ENCODE measurements at regions of chr11 and their contacts with region 1.

Region 1: GRCh38 chr11:34126959-34127848 is 21.8 kb downstream of the NAT10 start:
- DNase-seq: no peak
- ATAC-seq: no peak
- H3K4me3 ChIP-seq: no peak overlapping the region
- H3K27ac ChIP-seq: no peak overlapping the region
- H3K4me1 ChIP-seq: no peaks in the 10 kb centered on the region
- H3K27me3 ChIP-seq: no peaks in the 10 kb centered on the region
- CTCF ChIP-seq: no peak
- EP300 ChIP-seq: no peak
- POLR2A ChIP-seq: no peak
- RAD21 ChIP-seq: no peak

Region 2: DNA sequence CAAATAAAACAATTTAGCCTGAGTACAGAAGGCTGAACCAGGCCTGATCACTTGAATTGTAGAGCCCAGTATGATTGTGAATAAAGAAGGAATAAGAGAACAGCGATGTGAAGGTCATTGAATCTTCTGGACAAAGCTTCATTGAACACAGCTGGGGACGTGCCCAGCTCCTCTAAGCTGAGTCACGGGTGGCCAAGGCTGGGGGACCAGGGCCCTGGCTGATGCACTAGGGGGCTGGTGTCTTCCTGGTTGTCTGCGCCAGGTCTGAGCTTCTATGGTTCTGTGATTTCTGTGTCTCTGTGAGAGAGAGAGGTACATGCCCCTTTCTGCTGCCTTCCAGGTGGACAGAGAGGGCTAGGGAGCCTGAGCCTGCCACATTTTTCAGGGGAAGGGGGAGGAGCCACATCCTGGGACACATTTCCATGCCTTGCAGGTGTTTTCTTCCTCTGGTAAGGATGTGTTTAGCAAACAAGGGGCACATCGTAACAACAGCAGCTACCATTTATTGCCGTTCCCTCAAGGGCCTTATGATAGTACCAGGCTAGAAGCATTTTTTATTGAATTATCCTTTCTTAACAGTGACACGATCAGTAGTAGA is 562.2 kb before region 1 on chr11:
- CTCF ChIA-PET with region 1: no interaction called
- POLR2A ChIA-PET with region 1: no interaction called
- in situ Hi-C with region 1: no loop called
- intact Hi-C with region 1: no loop called
- DNase-seq: no peak
- ATAC-seq: no peak
- H3K4me3 ChIP-seq: no peak overlapping the region
- H3K27ac ChIP-seq: no peak overlapping the region
- H3K4me1 ChIP-seq: no peaks in the 10 kb centered on the region
- H3K27me3 ChIP-seq: peaks cover 23 to 29% of the 10 kb centered on the region in 2 experiments
- CTCF ChIP-seq: no peak
- EP300 ChIP-seq: no peak
- POLR2A ChIP-seq: no peak
- RAD21 ChIP-seq: no peak

Region 3: GRCh38 chr11:34013898-34014571 is 113.2 kb before region 1 on chr11:
- CTCF ChIA-PET with region 1: no interaction called
- POLR2A ChIA-PET with region 1: no interaction called
- in situ Hi-C with region 1: no loop called
- intact Hi-C with region 1: no loop called
- DNase-seq: no peak
- ATAC-seq: peak; percentile 35; the same call in 1 of the 3 replicates
- H3K4me3 ChIP-seq: no peak overlapping the region
- H3K27ac ChIP-seq: no peak overlapping the region
- H3K4me1 ChIP-seq: no peaks in the 10 kb centered on the region; a peak in 1 of 5 replicates
- H3K27me3 ChIP-seq: no peaks in the 10 kb centered on the region
- CTCF ChIP-seq: no peak
- EP300 ChIP-seq: no peak
- POLR2A ChIP-seq: no peak
- RAD21 ChIP-seq: no peak

Region 4: DNA sequence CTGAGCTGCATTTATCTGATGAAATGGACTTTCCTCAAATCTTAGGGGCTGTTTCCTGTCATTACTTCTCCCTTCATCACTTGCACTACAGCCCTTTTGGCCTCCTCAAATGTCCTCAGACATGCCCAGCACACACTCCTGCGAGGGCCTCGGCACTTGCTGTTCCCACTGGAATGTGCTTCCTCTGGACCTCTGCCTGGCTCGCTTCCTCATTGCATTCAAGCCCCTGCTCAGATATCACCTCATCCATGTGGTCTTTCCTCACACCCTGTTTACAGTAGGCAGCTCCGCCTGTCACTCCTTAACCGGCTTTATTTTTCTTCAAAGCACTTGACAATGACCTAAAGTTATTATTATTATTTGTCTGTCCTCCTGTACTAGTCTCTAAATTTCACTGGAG is 12.7 kb before region 1 on chr11:
- CTCF ChIA-PET with region 1: no interaction called
- POLR2A ChIA-PET with region 1: interaction called, 10 read pairs
- in situ Hi-C with region 1: no loop called
- intact Hi-C with region 1: no loop called
- DNase-seq: no peak
- ATAC-seq: no peak
- H3K4me3 ChIP-seq: no peak overlapping the region
- H3K27ac ChIP-seq: no peak overlapping the region
- H3K4me1 ChIP-seq: no peaks in the 10 kb centered on the region
- H3K27me3 ChIP-seq: no peaks in the 10 kb centered on the region
- CTCF ChIP-seq: no peak
- EP300 ChIP-seq: no peak
- POLR2A ChIP-seq: no peak
- RAD21 ChIP-seq: no peak